ENCODE measurements at regions of chr10 and their contacts with region 1.

Region 1: GRCh38 chr10:11424456-11425297 is 186.8 kb downstream of the USP6NL start:
- DNase-seq: no peak
- ATAC-seq: no peak
- H3K4me3 ChIP-seq: no peak overlapping the region
- H3K4me3 Mint-ChIP-seq: no peak overlapping the region
- H3K27ac ChIP-seq: no peak overlapping the region
- H3K27ac Mint-ChIP-seq: peak overlapping the region in 1 of 2 donors; percentile 66
- H3K4me1 ChIP-seq: peaks cover 5 to 14% of the 10 kb centered on the region in 2 experiments
- H3K4me1 Mint-ChIP-seq: peaks cover 15 to 19% (median 18%) of the 10 kb centered on the region in 3 donors
- H3K27me3 ChIP-seq: no peaks in the 10 kb centered on the region
- H3K27me3 Mint-ChIP-seq: no peaks in the 10 kb centered on the region

Region 2: DNA sequence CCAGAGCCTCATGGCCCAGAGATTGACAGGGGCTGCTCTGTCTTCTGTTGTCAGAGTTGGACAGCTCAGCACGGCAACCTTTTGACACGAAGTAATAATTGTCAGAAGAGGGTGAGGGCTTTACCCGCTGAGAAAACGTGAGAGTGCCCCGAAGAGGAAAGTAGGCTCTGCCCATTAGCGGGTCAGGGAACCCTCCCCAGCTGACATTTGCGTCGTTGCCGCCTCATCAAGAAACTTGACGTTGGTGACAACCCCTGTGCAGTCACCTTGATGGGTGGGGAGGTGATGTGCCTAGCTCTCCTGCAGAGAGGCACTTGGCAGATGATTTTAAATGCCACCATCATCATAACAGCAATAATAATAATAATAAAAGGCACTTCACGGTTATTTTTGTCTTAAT is 15.3 kb before region 1 on chr10:
- CTCF ChIA-PET with region 1: no interaction called
- POLR2A ChIA-PET with region 1: interaction called, 6 to 20 read pairs
- DNase-seq: no peak
- ATAC-seq: no peak
- H3K4me3 ChIP-seq: no peak overlapping the region
- H3K4me3 Mint-ChIP-seq: no peak overlapping the region
- H3K27ac ChIP-seq: no peak overlapping the region
- H3K27ac Mint-ChIP-seq: no peak overlapping the region
- H3K4me1 ChIP-seq: peaks cover 12 to 43% of the 10 kb centered on the region in 2 experiments
- H3K4me1 Mint-ChIP-seq: peaks cover 45 to 50% (median 46%) of the 10 kb centered on the region in 3 donors
- H3K27me3 ChIP-seq: no peaks in the 10 kb centered on the region
- H3K27me3 Mint-ChIP-seq: no peaks in the 10 kb centered on the region

Region 3: DNA sequence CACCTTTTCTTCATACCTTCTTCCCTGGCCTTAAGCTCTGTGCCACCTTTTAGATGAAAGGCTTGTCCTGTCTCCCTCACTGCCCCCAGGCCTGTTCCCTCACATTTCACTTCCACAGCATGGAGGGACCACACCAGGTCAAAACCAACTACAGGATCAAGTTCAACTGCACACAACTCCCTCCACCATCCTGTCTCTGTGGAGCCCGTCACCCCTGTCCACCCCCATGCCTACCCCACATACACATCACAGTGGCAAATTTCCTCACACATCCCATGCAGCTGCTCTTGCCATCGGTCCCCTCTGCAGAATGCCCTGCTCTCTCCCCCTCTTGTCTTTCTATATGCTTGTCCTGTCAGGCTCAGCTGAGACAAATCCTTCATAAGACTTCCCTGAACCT is 32.7 kb after region 1 on chr10:
- CTCF ChIA-PET with region 1: no interaction called
- POLR2A ChIA-PET with region 1: no interaction called
- DNase-seq: no peak
- ATAC-seq: no peak
- H3K4me3 ChIP-seq: no peak overlapping the region
- H3K4me3 Mint-ChIP-seq: no peak overlapping the region
- H3K27ac ChIP-seq: no peak overlapping the region
- H3K27ac Mint-ChIP-seq: no peak overlapping the region
- H3K4me1 ChIP-seq: no peaks in the 10 kb centered on the region
- H3K4me1 Mint-ChIP-seq: no peaks in the 10 kb centered on the region
- H3K27me3 ChIP-seq: no peaks in the 10 kb centered on the region
- H3K27me3 Mint-ChIP-seq: no peaks in the 10 kb centered on the region

Region 4: GRCh38 chr10:12235796-12236195 is 811.1 kb after region 1 on chr10:
- CTCF ChIA-PET with region 1: no interaction called
- POLR2A ChIA-PET with region 1: no interaction called
- DNase-seq: no peak
- ATAC-seq: no peak
- H3K4me3 ChIP-seq: no peak overlapping the region
- H3K4me3 Mint-ChIP-seq: no peak overlapping the region
- H3K27ac ChIP-seq: no peak overlapping the region
- H3K27ac Mint-ChIP-seq: no peak overlapping the region
- H3K4me1 ChIP-seq: no peaks in the 10 kb centered on the region
- H3K4me1 Mint-ChIP-seq: peaks cover 3 to 11% (median 8%) of the 10 kb centered on the region in 3 donors
- H3K27me3 ChIP-seq: no peaks in the 10 kb centered on the region
- H3K27me3 Mint-ChIP-seq: no peaks in the 10 kb centered on the region